Posterior vena cava (tissue), 2 donors: ENCODE measurements at regions of chr6 and their contacts with region 1.

Region 1: GRCh38 chr6:41222513-41222912 is 5.6 kb upstream of the TREML4 start:
- DNase-seq: peak; percentile 63

Region 2: DNA sequence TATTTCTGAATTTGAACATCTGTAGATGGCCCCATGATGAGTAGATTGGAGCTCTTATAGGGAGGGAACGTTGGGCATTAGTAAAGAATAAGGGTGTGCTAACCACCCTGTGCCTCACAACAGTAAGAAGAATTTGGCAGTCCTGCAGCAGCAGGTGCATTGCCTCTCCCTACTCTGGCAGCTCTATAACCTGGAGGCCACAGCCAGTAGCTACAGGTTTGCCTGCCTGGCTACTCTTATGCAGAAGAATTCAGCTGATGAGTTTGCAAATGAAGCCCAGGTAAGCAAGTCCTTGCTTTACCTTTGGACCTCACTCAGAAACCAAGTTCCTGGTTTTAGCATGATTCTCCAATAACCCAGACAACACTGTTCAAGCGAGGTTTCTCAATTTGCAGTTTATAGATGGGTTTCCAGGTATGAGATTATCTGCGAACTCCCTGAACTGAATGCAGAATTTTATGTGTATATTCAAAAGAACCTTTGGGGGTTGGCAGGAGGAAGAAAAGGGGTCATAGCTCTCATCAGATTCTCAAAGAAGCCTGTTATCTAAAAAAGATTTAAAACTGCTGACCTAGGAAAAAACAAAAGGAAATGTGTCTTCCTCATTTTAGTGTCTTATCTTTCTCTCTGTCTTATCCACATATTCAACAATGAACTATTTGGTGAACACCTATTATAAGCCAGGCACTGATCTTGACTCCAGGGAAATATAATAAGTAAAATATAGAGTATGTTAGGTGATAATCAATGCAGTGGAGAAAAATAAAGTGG is 87.3 kb before region 1 on chr6:
- intact Hi-C with region 1: no loop called
- DNase-seq: no peak

Region 3: DNA sequence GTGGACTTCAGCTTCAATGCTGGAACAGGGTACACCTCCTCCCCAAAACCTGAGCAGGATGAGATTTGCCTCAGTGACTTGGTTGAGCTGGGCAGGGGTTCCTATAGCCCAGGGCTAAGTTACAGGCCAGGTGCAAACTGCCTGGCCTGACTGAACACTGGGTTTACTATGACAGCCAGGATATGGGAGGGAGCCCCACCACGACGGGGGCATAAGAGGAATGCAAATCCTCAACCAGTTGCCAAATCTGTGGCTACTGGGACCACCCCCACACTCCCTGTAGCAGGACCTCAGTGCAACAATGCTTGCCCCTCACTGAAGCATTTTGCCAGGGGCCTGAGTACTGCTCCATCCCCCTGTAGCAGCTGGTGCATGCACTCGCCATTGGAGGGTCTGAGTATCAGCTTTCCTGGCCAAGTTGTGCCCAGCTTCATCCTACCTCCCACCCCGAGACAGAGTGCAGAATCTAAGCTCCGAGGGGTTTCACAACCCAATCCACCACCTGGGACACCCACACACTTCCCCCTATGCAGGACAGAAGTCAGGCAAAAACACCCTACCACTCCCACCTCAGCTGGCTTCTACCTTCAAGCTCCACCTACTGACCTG is 33.2 kb after region 1 on chr6:
- intact Hi-C with region 1: loop called in 1 of 2 experiments (anchors 1 kb)
- DNase-seq: no peak